Activated naive CD4-positive, alpha-beta T cell treated with anti-CD3 and anti-CD28 coated beads for 36 hours (primary cell): ENCODE measurements at regions of chr16 and their contacts with region 1.

Region 1: GRCh38 chr16:24858219-24859041 is 12.7 kb downstream of the SLC5A11 start:
- DNase-seq: peak; percentile 77
- H3K4me3 Mint-ChIP-seq: no peak overlapping the region
- H3K27ac Mint-ChIP-seq: no peak overlapping the region
- H3K4me1 Mint-ChIP-seq: no peaks in the 10 kb centered on the region
- H3K27me3 Mint-ChIP-seq: peaks cover 4% of the 10 kb centered on the region

Region 2: DNA sequence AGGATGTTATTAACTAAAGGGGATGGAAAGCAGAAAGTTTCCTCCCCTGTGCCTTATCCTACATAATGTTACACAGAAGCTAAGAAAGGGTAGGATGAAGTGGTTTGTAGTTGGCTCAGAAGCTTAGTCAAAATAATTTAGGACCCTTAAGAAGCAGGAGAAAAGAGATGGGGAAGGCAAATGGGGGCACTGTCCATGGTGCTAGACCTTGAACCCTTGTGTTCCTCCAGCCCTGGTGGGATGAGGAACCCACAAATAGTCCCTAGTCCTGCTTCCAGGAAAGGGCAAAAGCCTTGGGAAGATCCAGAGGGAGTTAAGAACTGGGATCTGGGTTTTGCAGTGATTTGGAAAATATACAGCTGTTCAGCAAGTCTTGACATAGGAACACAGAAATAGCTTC is 41.8 kb after region 1 on chr16:
- CTCF ChIA-PET with region 1: no interaction called
- intact Hi-C with region 1: loop called (anchors 5 kb)
- DNase-seq: no peak
- H3K4me3 Mint-ChIP-seq: no peak overlapping the region
- H3K27ac Mint-ChIP-seq: no peak overlapping the region
- H3K4me1 Mint-ChIP-seq: no peaks in the 10 kb centered on the region
- H3K27me3 Mint-ChIP-seq: no peaks in the 10 kb centered on the region

Region 3: DNA sequence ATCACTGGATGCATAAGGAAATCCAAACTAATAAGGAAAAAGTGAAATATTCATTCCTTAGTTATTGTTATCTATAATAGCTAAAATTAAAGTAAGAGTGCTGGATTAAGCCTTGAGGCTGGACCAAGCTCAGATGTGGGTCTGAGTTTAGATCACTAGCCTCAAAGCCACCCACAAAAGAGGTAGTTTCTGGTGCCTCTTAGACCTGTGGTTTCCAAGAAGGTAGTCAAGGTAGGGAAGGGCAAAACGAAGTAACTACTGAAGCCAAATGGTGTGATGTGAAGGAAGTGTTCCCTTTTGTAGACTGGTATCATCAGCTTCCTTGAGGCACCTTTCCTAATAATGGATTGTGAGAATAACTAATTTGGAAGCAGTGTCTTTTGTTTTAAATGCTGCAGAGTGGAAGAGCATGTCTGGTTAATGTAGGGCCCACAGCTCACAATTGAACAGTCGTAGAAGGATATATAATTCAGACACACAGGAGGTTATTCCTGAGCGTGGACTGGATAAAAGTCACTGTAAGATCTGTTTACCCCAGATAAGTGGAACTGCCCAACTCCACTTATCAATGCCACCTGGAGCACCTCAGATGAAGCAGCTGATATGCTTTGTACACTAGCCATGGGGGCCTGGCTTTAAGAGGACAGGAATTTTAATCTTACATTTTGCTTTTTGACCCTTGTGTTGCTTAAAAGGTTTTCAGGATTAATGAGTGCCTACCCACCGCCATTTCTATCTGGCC is 221.4 kb after region 1 on chr16:
- CTCF ChIA-PET with region 1: no interaction called
- intact Hi-C with region 1: no loop called
- DNase-seq: no peak
- H3K4me3 Mint-ChIP-seq: no peak overlapping the region
- H3K27ac Mint-ChIP-seq: no peak overlapping the region
- H3K4me1 Mint-ChIP-seq: no peaks in the 10 kb centered on the region
- H3K27me3 Mint-ChIP-seq: no peaks in the 10 kb centered on the region